Uterus (tissue), 4 donors: ENCODE measurements at regions of chr11 and their contacts with region 1.

Region 1: GRCh38 chr11:15650105-15650938 is 535.6 kb downstream of the INSC start:
- DNase-seq: peak; percentile 86 to 97
- H3K4me3 ChIP-seq: peak overlapping the region; percentile 20 to 41
- H3K27ac ChIP-seq: peak overlapping the region; percentile 58 to 76
- H3K4me1 ChIP-seq: peaks cover 0 to 4% of the 10 kb centered on the region in 2 donors
- H3K27me3 ChIP-seq: no peaks in the 10 kb centered on the region
- CTCF ChIP-seq: peak; percentile 98 to 99 (median 98)
- POLR2A ChIP-seq: peak in 1 of 2 donors; percentile 29

Region 2: GRCh38 chr11:16605894-16606783 is 955.8 kb after region 1 on chr11:
- intact Hi-C with region 1: loop called (anchors 2 kb)
- DNase-seq: peak; percentile 82 to 87
- H3K4me3 ChIP-seq: peak overlapping the region; percentile 31 to 54
- H3K27ac ChIP-seq: peak overlapping the region; percentile 65 to 67
- H3K4me1 ChIP-seq: peaks cover 0 to 9% of the 10 kb centered on the region in 2 donors
- H3K27me3 ChIP-seq: peaks cover 9 to 39% of the 10 kb centered on the region in 2 donors
- CTCF ChIP-seq: peak; percentile 86 to 94 (median 90)
- POLR2A ChIP-seq: peak; percentile 38 to 42

Region 3: GRCh38 chr11:17207317-17208258 is 1557.3 kb after region 1 on chr11 and contains the start of gene PIK3C2A:
- intact Hi-C with region 1: loop called (anchors 10 kb)
- DNase-seq: peak; percentile 95 to 97
- H3K4me3 ChIP-seq: peak within 1 kb of the TSS; percentile 76 to 91
- H3K27ac ChIP-seq: peak within 1 kb of the TSS; percentile 98
- H3K4me1 ChIP-seq: no peaks in the 10 kb centered on the region
- H3K27me3 ChIP-seq: no peaks in the 10 kb centered on the region
- CTCF ChIP-seq: no peak
- POLR2A ChIP-seq: peak; percentile 92 to 97
- total RNA-seq, gene PIK3C2A: 63.5 to 147 (median 90.5) TPM